ENCODE measurements at regions of chr12 and their contacts with region 1.

Region 1: GRCh38 chr12:122888232-122888867 is 7.6 kb downstream of the VPS37B start:
- DNase-seq: no peak
- ATAC-seq: peak; percentile 55
- H3K4me3 Mint-ChIP-seq: peak overlapping the region; percentile 88
- H3K27ac Mint-ChIP-seq: peak overlapping the region; percentile 96
- H3K4me1 Mint-ChIP-seq: peaks cover 93% of the 10 kb centered on the region
- H3K27me3 Mint-ChIP-seq: no peaks in the 10 kb centered on the region
- CTCF ChIP-seq: no peak

Region 2: GRCh38 chr12:122871851-122872780 is 16.2 kb before region 1 on chr12:
- CTCF ChIA-PET with region 1: interaction called, 6 read pairs
- POLR2A ChIA-PET with region 1: interaction called, 47 read pairs
- intact Hi-C with region 1: loop called (anchors 1 kb)
- DNase-seq: peak; percentile 46
- ATAC-seq: peak; percentile 66
- H3K4me3 Mint-ChIP-seq: peak overlapping the region; percentile 84
- H3K27ac Mint-ChIP-seq: peak overlapping the region; percentile 93
- H3K4me1 Mint-ChIP-seq: peaks cover 91% of the 10 kb centered on the region
- H3K27me3 Mint-ChIP-seq: no peaks in the 10 kb centered on the region
- CTCF ChIP-seq: no peak

Region 3: DNA sequence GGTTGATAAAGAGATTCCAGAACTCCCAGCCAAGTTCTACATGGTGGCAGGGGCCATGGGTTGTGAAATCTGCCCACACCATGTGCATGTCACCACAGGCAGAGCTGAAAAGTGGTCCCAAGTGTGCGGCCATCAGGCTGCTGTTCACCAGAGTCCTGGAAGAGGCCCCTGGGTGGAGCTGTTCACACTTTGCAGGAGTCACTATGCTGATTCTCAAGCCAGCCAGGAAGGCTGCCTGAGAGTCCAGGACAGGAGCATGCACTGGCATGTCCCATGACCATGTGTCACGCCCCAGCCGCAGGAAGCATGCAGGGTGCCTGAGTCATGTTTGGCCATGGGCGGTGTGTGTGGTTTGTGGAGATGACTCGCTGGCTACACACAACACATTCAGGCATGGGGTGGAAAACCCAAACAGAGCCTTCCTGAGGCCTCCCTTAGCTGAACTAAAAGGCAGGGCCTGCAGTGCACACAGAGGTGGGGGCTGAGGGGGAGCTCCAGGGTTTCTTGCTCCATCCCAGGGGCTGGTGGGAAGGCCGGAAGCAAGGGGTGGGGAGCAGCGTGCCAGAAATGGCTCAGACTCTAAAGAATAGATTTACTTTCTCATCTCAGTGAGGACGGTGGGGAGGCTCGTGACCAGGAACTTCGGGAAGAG is 58.5 kb after region 1 on chr12:
- CTCF ChIA-PET with region 1: interaction called, 25 read pairs
- POLR2A ChIA-PET with region 1: interaction called, 18 read pairs
- intact Hi-C with region 1: no loop called
- DNase-seq: peak; percentile 52
- ATAC-seq: peak; percentile 81
- H3K4me3 Mint-ChIP-seq: peak overlapping the region; percentile 57
- H3K27ac Mint-ChIP-seq: peak overlapping the region; percentile 68
- H3K4me1 Mint-ChIP-seq: peaks cover 48% of the 10 kb centered on the region
- H3K27me3 Mint-ChIP-seq: no peaks in the 10 kb centered on the region
- CTCF ChIP-seq: no peak

Region 4: DNA sequence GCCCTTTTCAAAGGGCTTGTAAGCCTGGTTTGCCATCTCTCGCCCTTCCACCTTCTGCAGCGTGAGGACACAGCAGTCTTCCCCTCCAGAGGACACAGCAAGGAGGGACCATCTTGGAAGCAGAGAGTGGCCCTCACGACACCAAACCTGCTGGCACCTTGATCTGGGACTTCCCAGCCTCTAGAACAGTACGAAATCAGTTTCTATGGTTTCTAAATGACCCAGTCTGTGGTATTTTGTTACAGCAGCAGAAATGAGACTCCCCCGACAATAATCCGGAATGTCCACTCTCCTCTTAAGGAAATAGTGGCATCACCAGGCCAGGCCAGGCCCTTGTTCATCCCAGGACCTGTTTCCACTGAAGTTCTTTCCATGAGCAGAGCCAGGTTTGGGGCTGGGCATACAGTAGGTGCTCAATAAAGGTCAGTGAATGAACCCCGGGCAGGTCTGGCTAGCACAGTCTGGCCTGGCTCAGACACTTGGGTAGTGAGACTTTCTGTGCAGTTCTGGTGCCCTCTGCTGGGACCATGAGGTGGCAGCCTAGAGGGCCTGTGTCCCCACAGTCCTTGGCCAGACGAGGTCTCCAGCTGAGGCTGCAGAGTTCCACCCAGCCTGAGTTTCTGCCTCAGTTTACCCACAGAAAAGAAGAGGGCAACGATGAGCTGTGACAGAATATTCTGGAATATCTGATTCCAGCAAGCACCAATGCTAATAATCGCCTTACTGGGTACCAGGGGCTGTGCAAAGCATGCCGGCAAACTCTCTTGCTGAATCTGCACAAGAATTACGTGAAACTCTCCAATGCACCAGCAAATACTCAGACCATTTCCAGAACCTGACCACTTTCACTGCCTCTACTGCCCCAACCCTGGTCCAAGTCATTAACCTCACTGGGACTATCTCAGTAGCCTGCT is 63.9 kb after region 1 on chr12:
- CTCF ChIA-PET with region 1: interaction called, 25 read pairs
- POLR2A ChIA-PET with region 1: interaction called, 18 read pairs
- intact Hi-C with region 1: no loop called
- DNase-seq: peak; percentile 60
- ATAC-seq: peak; percentile 96
- H3K4me3 Mint-ChIP-seq: no peak overlapping the region
- H3K27ac Mint-ChIP-seq: peak overlapping the region; percentile 18
- H3K4me1 Mint-ChIP-seq: peaks cover 24% of the 10 kb centered on the region
- H3K27me3 Mint-ChIP-seq: no peaks in the 10 kb centered on the region
- CTCF ChIP-seq: peak; percentile 79

Region 5: DNA sequence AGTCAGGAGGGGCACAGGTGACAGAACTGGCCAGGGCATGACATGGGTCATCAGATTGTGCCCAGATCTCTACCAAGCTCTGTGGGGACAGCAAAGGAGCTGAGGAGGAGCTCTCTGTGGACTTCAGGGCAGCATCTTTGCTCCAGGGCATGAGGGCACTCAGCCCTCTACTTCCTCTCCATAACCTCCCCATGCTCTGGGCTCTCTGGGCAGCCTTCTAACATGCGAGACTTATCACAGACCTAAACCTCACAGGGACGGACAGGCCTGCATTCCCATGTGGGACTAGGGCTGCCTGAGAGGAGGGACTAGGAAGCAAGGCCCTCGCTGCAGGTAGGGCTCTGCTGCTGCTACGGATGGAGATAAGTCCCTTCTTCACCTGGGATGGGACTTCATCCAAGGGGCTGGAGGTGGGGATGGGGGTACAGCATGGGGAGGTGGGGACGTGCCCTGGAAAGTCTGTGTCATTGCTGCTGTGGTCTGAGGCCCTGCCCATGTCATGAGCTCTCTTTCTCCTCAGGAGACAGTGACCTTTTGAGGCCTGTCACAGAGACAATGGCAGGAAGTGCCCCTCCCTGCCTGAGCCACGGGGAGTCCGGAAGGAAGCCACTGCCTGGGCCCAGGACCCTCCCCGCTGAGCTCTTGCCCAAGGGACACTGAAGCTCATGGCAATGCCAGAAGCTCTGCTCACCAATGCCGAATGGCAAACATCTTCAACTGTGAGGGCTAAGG is 218.4 kb after region 1 on chr12:
- CTCF ChIA-PET with region 1: no interaction called
- POLR2A ChIA-PET with region 1: interaction called, 10 read pairs
- intact Hi-C with region 1: no loop called
- DNase-seq: peak; percentile 32
- ATAC-seq: peak; percentile 94
- H3K4me3 Mint-ChIP-seq: peak overlapping the region; percentile 61
- H3K27ac Mint-ChIP-seq: peak overlapping the region; percentile 89
- H3K4me1 Mint-ChIP-seq: peaks cover 36% of the 10 kb centered on the region
- H3K27me3 Mint-ChIP-seq: no peaks in the 10 kb centered on the region
- CTCF ChIP-seq: no peak

Region 6: GRCh38 chr12:123614531-123614930 is 726.2 kb after region 1 on chr12:
- CTCF ChIA-PET with region 1: no interaction called
- POLR2A ChIA-PET with region 1: no interaction called
- intact Hi-C with region 1: no loop called
- DNase-seq: no peak
- ATAC-seq: no peak
- H3K4me3 Mint-ChIP-seq: no peak overlapping the region
- H3K27ac Mint-ChIP-seq: no peak overlapping the region
- H3K4me1 Mint-ChIP-seq: no peaks in the 10 kb centered on the region
- H3K27me3 Mint-ChIP-seq: no peaks in the 10 kb centered on the region
- CTCF ChIP-seq: no peak

Measured in activated B cell treated with CpG ODN at 0.5 μM for 24 hours (primary cell).